Sigmoid colon (tissue), 7 donors: ENCODE measurements at regions of chr9 and their contacts with region 1.

Region 1: DNA sequence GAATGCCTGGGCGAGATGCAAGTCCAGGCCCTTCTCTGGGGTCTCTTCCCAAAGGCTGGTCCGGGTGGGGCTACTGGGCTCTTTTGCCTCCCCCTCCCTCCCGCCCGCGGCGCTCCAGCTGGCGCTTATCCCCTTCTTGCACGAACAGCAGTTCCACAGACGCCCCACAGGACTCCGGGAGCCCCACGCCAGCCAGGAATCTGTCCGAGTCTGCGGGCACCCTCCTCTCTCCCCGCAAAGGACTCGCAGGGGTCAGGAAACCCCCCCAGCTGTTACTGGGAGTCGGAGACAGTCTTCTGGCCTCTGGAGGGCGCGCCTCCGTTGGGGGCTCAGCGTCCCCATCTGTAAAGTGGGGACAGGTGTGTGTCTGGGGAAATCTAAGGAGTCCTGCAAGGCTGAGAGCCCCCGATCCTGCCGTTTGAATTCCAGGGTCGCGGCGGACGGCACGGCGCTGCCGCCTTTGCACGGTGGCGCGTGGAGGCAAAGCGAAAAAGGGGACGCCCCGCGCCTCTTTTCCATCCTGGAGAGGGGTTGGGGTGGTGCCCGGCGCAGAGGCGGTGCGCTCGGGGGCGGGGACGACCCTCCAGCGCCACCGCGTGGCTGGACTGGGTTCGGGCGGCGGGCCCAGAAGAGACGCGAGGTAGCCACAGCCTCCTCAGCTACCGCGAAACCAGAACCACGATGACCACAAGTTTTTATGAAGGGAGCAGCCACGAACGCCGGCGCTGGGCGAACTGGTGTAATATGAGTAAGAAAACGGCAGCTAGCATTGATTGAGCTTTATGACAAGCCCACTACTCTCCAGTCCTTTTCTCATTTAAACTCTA is 2.9 kb upstream of the CCIN start:
- DNase-seq: peak; percentile 93
- H3K4me3 ChIP-seq: peak overlapping the region; percentile 35 to 62 (median 54)
- H3K27ac ChIP-seq: peak overlapping the region; percentile 83 to 99 (median 86)
- H3K4me1 ChIP-seq: peaks cover 0 to 56% (median 48%) of the 10 kb centered on the region in 4 donors
- H3K27me3 ChIP-seq: no peaks in the 10 kb centered on the region
- CTCF ChIP-seq: peak; percentile 87 to 94 (median 92)
- EP300 ChIP-seq: no peak
- POLR2A ChIP-seq: no peak

Region 2: GRCh38 chr9:36102742-36103495 is 63.4 kb before region 1 on chr9:
- intact Hi-C with region 1: loop called (anchors 1 kb)
- DNase-seq: peak; percentile 92
- H3K4me3 ChIP-seq: no peak overlapping the region
- H3K27ac ChIP-seq: peak overlapping the region in 2 of 4 donors; percentile 21 to 37
- H3K4me1 ChIP-seq: peaks cover 0 to 4% (median 0%) of the 10 kb centered on the region in 4 donors
- H3K27me3 ChIP-seq: no peaks in the 10 kb centered on the region
- CTCF ChIP-seq: peak; percentile 62 to 87 (median 81)
- EP300 ChIP-seq: no peak
- POLR2A ChIP-seq: no peak

Region 3: GRCh38 chr9:36136272-36136893 is 29.9 kb before region 1 on chr9 and contains the start of gene GLIPR2:
- intact Hi-C with region 1: loop called (anchors 1 kb)
- DNase-seq: peak; percentile 92
- H3K4me3 ChIP-seq: peak within 1 kb of the TSS; percentile 69 to 99 (median 91)
- H3K27ac ChIP-seq: peak within 1 kb of the TSS; percentile 90 to 99 (median 96)
- H3K4me1 ChIP-seq: peaks cover 0 to 56% (median 46%) of the 10 kb centered on the region in 4 donors
- H3K27me3 ChIP-seq: no peaks in the 10 kb centered on the region
- CTCF ChIP-seq: peak in 1 of 4 experiments; percentile 28
- EP300 ChIP-seq: no peak
- POLR2A ChIP-seq: peak; percentile 48 to 58
- total RNA-seq, gene GLIPR2: 57.3 to 90.6 (median 77.6) TPM

Region 4: GRCh38 chr9:36148311-36149051 is 17.8 kb before region 1 on chr9:
- intact Hi-C with region 1: loop called (anchors 2 kb)
- DNase-seq: peak; percentile 100
- H3K4me3 ChIP-seq: no peak overlapping the region
- H3K27ac ChIP-seq: peak overlapping the region; percentile 86 to 99 (median 90)
- H3K4me1 ChIP-seq: peaks cover 0 to 85% (median 78%) of the 10 kb centered on the region in 4 donors
- H3K27me3 ChIP-seq: no peaks in the 10 kb centered on the region
- CTCF ChIP-seq: no peak
- EP300 ChIP-seq: peak in 2 of 4 donors; percentile 63 to 88
- POLR2A ChIP-seq: no peak